ENCODE measurements at regions of chr11 and their contacts with region 1.

Region 1: DNA sequence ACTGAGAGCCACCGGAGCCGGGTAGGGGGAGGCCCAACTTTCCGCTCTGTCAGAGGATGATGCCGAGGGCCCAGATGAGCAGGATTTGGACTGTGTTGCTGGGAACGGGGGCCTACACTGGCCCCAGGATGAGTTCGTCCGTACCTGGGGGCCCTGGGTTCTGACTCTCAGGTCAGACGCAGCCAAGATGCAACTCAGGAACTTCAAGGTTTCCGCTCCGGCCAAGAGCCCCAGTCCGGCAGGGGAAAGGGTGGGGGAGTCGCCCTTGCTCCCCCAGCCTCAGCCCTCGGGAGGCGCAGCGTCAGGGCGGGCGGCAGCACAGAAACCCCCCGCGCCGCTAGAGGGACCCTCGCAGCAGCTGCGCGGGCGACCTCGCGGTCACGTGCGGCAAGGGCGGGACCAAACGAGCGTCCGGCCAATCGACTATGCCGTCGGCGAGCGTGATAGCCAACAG is 241 bp upstream of the ARL2 start:
- DNase-seq: peak; percentile 96

Region 2: DNA sequence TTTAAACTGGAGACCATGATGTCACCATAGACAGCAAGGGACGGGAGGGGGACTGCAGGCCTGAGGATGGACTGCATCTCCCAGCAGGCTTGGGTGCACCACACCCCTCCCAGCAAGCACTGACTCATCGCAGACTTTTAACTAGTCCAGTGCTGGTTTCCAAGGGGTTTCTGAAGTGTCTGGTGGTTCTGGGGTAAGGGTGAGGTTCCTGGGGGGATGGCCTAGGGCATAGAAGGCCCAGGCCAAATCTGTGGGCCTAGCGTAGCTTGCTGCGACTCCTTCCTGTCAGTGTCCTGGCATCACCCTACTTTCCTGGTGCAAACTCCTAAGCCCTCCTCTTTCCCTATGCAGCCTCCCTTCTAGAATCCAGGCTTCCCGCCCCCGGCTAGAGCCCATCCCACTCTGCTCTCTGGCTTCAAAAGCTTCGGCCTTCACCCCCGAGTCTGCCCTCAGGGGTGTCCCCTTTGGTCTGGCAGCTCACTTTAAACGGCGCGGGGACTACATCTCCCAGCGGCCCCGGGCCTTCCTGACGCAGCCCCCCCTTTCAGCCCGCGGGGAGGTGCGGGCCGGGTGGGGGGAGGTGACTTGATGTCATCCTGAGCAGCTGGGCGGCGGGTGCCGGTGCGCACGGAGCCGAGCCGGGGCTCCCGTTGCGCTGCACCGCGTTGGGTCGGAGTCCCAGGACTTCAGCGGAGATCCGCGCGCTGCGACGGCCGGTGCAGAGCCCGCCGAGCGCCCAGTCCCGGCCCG is 89.4 kb before region 1 on chr11 and contains the start of gene PPP2R5B:
- intact Hi-C with region 1: loop called (anchors 5 kb)
- DNase-seq: peak; percentile 96
- total RNA-seq, gene PPP2R5B: 24.9 TPM

Region 3: GRCh38 chr11:65117216-65118096 is 103.7 kb after region 1 on chr11 and contains the start of gene ZNHIT2:
- intact Hi-C with region 1: loop called (anchors 5 kb)
- DNase-seq: peak; percentile 100
- total RNA-seq, gene ZNHIT2: 5.5 TPM

Measured in cardiac septum (tissue), 1 donor.